ENCODE measurements at regions of chr9 and their contacts with region 1.

Region 1: GRCh38 chr9:106310782-106311181 is 552.2 kb upstream of the ZNF462 start:
- DNase-seq: peak; percentile 31
- ATAC-seq: peak; percentile 72
- H3K4me3 ChIP-seq: no peak overlapping the region
- H3K27ac ChIP-seq: no peak overlapping the region
- H3K4me1 ChIP-seq: no peaks in the 10 kb centered on the region
- H3K27me3 ChIP-seq: no peaks in the 10 kb centered on the region
- CTCF ChIP-seq: no peak
- EP300 ChIP-seq: peak; percentile 62 to 72; a peak in 2 of 4 replicates
- POLR2A ChIP-seq: no peak
- RAD21 ChIP-seq: no peak

Region 2: GRCh38 chr9:106092083-106092482 is 218.7 kb before region 1 on chr9:
- CTCF ChIA-PET with region 1: no interaction called
- POLR2A ChIA-PET with region 1: no interaction called
- RAD21 ChIA-PET with region 1: no interaction called
- SMC1A ChIA-PET with region 1: no interaction called
- in situ Hi-C with region 1: no loop called
- intact Hi-C with region 1: no loop called
- DNase-seq: no peak
- ATAC-seq: no peak
- H3K4me3 ChIP-seq: no peak overlapping the region
- H3K27ac ChIP-seq: no peak overlapping the region
- H3K4me1 ChIP-seq: no peaks in the 10 kb centered on the region
- H3K27me3 ChIP-seq: no peaks in the 10 kb centered on the region
- CTCF ChIP-seq: no peak
- EP300 ChIP-seq: no peak
- POLR2A ChIP-seq: no peak
- RAD21 ChIP-seq: no peak

Region 3: GRCh38 chr9:106333530-106333929 is 22.7 kb after region 1 on chr9:
- CTCF ChIA-PET with region 1: no interaction called
- POLR2A ChIA-PET with region 1: interaction called, 4 read pairs
- RAD21 ChIA-PET with region 1: interaction called, 9 read pairs
- SMC1A ChIA-PET with region 1: interaction called, 50 read pairs
- in situ Hi-C with region 1: no loop called
- intact Hi-C with region 1: no loop called
- DNase-seq: no peak
- ATAC-seq: no peak; the same call in 2 of the 3 replicates
- H3K4me3 ChIP-seq: no peak overlapping the region
- H3K27ac ChIP-seq: no peak overlapping the region
- H3K4me1 ChIP-seq: no peaks in the 10 kb centered on the region
- H3K27me3 ChIP-seq: no peaks in the 10 kb centered on the region
- CTCF ChIP-seq: no peak
- EP300 ChIP-seq: no peak
- POLR2A ChIP-seq: no peak
- RAD21 ChIP-seq: no peak

Region 4: GRCh38 chr9:106376677-106377076 is 65.9 kb after region 1 on chr9:
- CTCF ChIA-PET with region 1: no interaction called
- POLR2A ChIA-PET with region 1: no interaction called
- RAD21 ChIA-PET with region 1: no interaction called
- SMC1A ChIA-PET with region 1: no interaction called
- in situ Hi-C with region 1: no loop called
- intact Hi-C with region 1: no loop called
- DNase-seq: no peak
- ATAC-seq: peak; percentile 70
- H3K4me3 ChIP-seq: no peak overlapping the region
- H3K27ac ChIP-seq: no peak overlapping the region
- H3K4me1 ChIP-seq: no peaks in the 10 kb centered on the region
- H3K27me3 ChIP-seq: no peaks in the 10 kb centered on the region
- CTCF ChIP-seq: no peak
- EP300 ChIP-seq: no peak
- POLR2A ChIP-seq: no peak
- RAD21 ChIP-seq: no peak